ENCODE measurements at regions of chr12 and their contacts with region 1.

Region 1: GRCh38 chr12:6540181-6540877 is 6.0 kb downstream of the GAPDH start:
- DNase-seq: no peak
- ATAC-seq: peak; percentile 60
- H3K4me3 ChIP-seq: peak overlapping the region; percentile 28
- H3K27ac ChIP-seq: peak overlapping the region; percentile 42
- H3K4me1 ChIP-seq: peaks cover 26% of the 10 kb centered on the region
- H3K27me3 ChIP-seq: no peaks in the 10 kb centered on the region
- CTCF ChIP-seq: peak in 1 of 3 experiments; percentile 35; a peak in 1 of 6 replicates
- EP300 ChIP-seq: no peak
- POLR2A ChIP-seq: no peak
- RAD21 ChIP-seq: no peak

Region 2: GRCh38 chr12:6323340-6323994 is 216.9 kb before region 1 on chr12:
- CTCF ChIA-PET with region 1: interaction called, 8 read pairs
- POLR2A ChIA-PET with region 1: interaction called, 3 read pairs
- RAD21 ChIA-PET with region 1: interaction called, 10 read pairs
- SMC1A ChIA-PET with region 1: interaction called, 5 read pairs
- in situ Hi-C with region 1: no loop called
- intact Hi-C with region 1: no loop called
- DNase-seq: peak; percentile 71
- ATAC-seq: peak; percentile 87
- H3K4me3 ChIP-seq: no peak overlapping the region
- H3K27ac ChIP-seq: peak overlapping the region; percentile 79
- H3K4me1 ChIP-seq: peaks cover 31% of the 10 kb centered on the region
- H3K27me3 ChIP-seq: no peaks in the 10 kb centered on the region
- CTCF ChIP-seq: peak; percentile 38 to 45 (median 45); a peak in 5 of 6 replicates
- EP300 ChIP-seq: peak; percentile 46 to 53; a peak in 1 of 4 replicates
- POLR2A ChIP-seq: 0 out of 2 replicates have a peak, but pooled peaks have one; percentile 18
- RAD21 ChIP-seq: peak; percentile 34

Region 3: DNA sequence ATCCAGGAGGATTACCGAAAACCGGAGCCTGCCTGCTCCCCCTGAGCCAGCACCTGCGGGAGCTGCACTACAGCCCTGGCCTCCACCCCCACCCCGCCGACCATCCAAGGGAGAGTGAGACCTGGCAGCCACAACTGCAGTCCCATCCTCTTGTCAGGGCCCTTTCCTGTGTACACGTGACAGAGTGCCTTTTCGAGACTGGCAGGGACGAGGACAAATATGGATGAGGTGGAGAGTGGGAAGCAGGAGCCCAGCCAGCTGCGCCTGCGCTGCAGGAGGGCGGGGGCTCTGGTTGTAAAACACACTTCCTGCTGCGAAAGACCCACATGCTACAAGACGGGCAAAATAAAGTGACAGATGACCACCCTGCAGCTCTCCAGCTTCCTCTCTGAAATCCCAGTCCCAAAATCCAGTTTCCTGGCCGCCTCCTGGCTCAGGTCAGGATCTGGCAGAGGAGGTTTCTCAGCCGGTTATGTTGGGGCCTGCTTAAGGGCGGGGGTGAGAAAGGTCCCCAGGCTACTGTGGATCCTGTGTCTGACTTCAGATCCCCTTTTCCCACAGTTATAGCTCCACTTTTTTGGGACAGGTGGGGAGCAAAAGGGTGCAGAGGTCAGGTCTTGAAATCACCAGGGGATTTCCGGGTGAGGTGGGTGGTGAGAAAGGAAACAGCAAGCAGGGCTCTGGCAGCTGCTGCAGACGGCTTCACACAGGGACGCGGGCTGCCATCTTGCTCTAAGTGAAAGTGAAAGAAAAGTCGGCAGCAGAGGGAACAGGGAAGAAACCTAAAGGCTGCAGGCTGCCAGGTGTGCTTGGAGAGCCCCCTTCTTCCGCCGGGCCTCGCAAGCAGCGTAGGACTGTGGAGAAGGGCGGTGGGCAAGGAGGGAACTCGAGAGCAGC is 88.7 kb before region 1 on chr12 and contains the start of gene TAPBPL:
- CTCF ChIA-PET with region 1: interaction called, 5 read pairs
- POLR2A ChIA-PET with region 1: interaction called, 14 read pairs
- RAD21 ChIA-PET with region 1: interaction called, 5 read pairs
- SMC1A ChIA-PET with region 1: interaction called, 14 read pairs
- in situ Hi-C with region 1: no loop called
- intact Hi-C with region 1: no loop called
- DNase-seq: peak; percentile 75
- ATAC-seq: peak; percentile 84
- H3K4me3 ChIP-seq: peak within 1 kb of the TSS; percentile 83
- H3K27ac ChIP-seq: peak within 1 kb of the TSS; percentile 98
- H3K4me1 ChIP-seq: peaks cover 38% of the 10 kb centered on the region
- H3K27me3 ChIP-seq: no peaks in the 10 kb centered on the region
- CTCF ChIP-seq: no peak
- EP300 ChIP-seq: peak; percentile 18 to 46; a peak in 1 of 4 replicates
- POLR2A ChIP-seq: peak; percentile 82
- RAD21 ChIP-seq: no peak
- polyA plus RNA-seq, gene TAPBPL: 12.4 to 20.9 TPM

Region 4: DNA sequence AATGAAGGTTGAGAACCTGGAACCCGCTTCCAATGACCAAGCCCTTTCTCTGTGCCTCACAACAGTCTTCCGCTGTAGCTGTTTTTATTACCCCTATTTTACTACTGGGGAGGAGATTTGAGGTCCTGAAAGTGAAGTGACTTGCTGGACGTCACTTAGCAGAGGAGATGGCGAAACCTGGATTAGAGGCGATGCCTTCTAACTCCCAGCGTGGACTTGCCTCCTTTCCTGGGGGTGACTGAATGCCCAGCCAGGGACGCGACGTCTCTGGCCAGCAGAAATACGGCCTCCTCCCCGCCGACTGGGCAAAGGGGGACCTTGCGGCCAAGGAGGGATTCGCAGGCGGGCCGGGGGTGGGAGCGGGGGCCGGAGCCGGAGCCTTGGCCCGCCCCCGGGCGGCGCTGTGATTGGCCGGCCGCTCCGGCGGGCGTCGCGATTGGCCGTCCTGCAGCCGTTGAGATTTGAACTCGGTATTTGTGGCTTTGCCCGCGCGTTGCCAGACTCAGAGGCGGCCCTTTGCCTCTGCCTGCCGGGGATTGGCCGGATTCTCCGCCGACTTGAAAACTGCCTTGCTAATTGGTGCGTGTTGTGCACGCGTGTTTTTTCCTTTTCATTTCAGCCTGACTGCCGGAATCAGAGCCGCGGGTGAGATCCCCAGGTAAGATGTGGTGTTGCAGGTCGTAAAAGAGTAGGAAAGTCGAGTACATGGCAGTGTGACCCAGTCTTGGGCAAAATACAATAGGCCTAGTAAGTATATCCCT is 46.7 kb before region 1 on chr12 and contains the start of gene NCAPD2:
- CTCF ChIA-PET with region 1: interaction called, 15 read pairs
- POLR2A ChIA-PET with region 1: interaction called, 7 read pairs
- RAD21 ChIA-PET with region 1: interaction called, 9 read pairs
- SMC1A ChIA-PET with region 1: interaction called, 6 read pairs
- in situ Hi-C with region 1: no loop called
- intact Hi-C with region 1: no loop called
- DNase-seq: peak; percentile 88
- ATAC-seq: peak; percentile 94
- H3K4me3 ChIP-seq: peak within 1 kb of the TSS; percentile 93
- H3K27ac ChIP-seq: peak within 1 kb of the TSS; percentile 97
- H3K4me1 ChIP-seq: peaks cover 6% of the 10 kb centered on the region; the same call in 1 of the 2 replicates
- H3K27me3 ChIP-seq: no peaks in the 10 kb centered on the region
- CTCF ChIP-seq: peak in 2 of 3 experiments; percentile 2 to 25; a peak in 1 of 6 replicates
- EP300 ChIP-seq: no peak
- POLR2A ChIP-seq: peak; percentile 81
- RAD21 ChIP-seq: no peak
- polyA plus RNA-seq, gene NCAPD2: 24.2 to 32.8 TPM

Region 5: DNA sequence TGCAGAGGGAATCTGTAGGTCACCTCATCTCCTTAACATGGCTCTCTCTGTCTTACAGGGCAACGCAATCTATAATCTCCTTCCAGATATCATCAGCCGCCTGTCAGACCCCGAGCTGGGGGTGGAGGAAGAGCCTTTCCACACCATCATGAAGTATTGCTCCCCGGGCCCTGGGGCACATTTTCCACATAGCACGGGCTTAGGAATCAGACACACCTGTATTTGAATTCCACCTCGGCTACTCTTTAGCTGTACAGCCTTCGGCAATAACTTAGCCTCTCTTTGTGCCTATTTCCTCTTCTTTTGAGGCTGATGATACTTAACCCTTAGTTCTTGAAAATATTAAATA is 11.5 kb before region 1 on chr12:
- CTCF ChIA-PET with region 1: interaction called, 11 read pairs
- POLR2A ChIA-PET with region 1: interaction called, 3 read pairs
- RAD21 ChIA-PET with region 1: no interaction called
- SMC1A ChIA-PET with region 1: interaction called, 6 read pairs
- in situ Hi-C with region 1: no loop called
- intact Hi-C with region 1: no loop called
- DNase-seq: no peak
- ATAC-seq: no peak
- H3K4me3 ChIP-seq: no peak overlapping the region
- H3K27ac ChIP-seq: no peak overlapping the region
- H3K4me1 ChIP-seq: peaks cover 6% of the 10 kb centered on the region; the same call in 1 of the 2 replicates
- H3K27me3 ChIP-seq: no peaks in the 10 kb centered on the region
- CTCF ChIP-seq: no peak
- EP300 ChIP-seq: no peak
- POLR2A ChIP-seq: no peak
- RAD21 ChIP-seq: no peak

Region 6: GRCh38 chr12:6563448-6564050 is 23.2 kb after region 1 on chr12:
- CTCF ChIA-PET with region 1: interaction called, 12 read pairs
- POLR2A ChIA-PET with region 1: interaction called, 7 read pairs
- RAD21 ChIA-PET with region 1: interaction called, 3 read pairs
- SMC1A ChIA-PET with region 1: no interaction called
- in situ Hi-C with region 1: no loop called
- intact Hi-C with region 1: no loop called
- DNase-seq: no peak
- ATAC-seq: peak; percentile 54
- H3K4me3 ChIP-seq: no peak overlapping the region
- H3K27ac ChIP-seq: no peak overlapping the region
- H3K4me1 ChIP-seq: peaks cover 4% of the 10 kb centered on the region; the same call in 1 of the 2 replicates
- H3K27me3 ChIP-seq: no peaks in the 10 kb centered on the region
- CTCF ChIP-seq: peak; percentile 69 to 84 (median 73)
- EP300 ChIP-seq: no peak
- POLR2A ChIP-seq: no peak; the same call in 1 of the 2 replicates
- RAD21 ChIP-seq: peak; percentile 42

Region 7: DNA sequence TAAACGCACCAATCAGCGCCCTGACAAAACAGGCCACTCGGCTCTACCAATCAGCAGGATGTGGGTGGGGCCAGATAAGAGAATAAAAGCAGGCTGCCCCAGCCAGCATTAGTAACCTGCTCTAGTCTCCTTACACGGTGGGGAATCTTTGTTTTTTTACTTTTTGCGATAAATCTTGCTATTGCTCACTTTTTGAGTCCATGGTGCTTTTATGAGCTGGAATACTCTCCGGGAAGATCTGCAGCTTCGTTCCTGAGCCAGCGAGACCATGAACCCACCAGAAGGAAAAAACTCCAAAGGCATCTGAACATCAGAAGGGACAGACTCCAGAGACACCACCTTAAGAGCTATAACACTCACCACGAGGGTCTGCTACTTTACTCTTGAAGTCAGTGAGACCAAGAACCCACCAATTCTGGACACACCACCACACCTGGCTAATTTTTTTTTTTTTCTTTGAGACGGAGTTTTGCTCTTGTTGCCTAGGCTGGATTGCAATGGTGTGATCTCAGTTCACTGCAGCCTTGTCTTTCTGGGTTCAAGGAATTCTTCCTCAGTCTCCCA is 176.6 kb after region 1 on chr12:
- CTCF ChIA-PET with region 1: no interaction called
- POLR2A ChIA-PET with region 1: no interaction called
- RAD21 ChIA-PET with region 1: no interaction called
- SMC1A ChIA-PET with region 1: no interaction called
- in situ Hi-C with region 1: no loop called
- intact Hi-C with region 1: no loop called
- DNase-seq: no peak
- ATAC-seq: no peak
- H3K4me3 ChIP-seq: no peak overlapping the region
- H3K27ac ChIP-seq: no peak overlapping the region
- H3K4me1 ChIP-seq: no peaks in the 10 kb centered on the region
- H3K27me3 ChIP-seq: no peaks in the 10 kb centered on the region
- CTCF ChIP-seq: no peak
- EP300 ChIP-seq: no peak
- POLR2A ChIP-seq: no peak
- RAD21 ChIP-seq: no peak